IMR-90 (cell line): ENCODE measurements at regions of chr6 and their contacts with region 1.

Region 1: GRCh38 chr6:52399511-52400312 is 20.4 kb upstream of the EFHC1 start:
- DNase-seq: peak; percentile 70
- ATAC-seq: peak; percentile 96
- H3K4me3 ChIP-seq: no peak overlapping the region
- H3K27ac ChIP-seq: no peak overlapping the region
- H3K4me1 ChIP-seq: peaks cover 2% of the 10 kb centered on the region; the same call in 1 of the 2 replicates
- H3K27me3 ChIP-seq: no peaks in the 10 kb centered on the region
- CTCF ChIP-seq: peak; percentile 91
- POLR2A ChIP-seq: no peak
- RAD21 ChIP-seq: peak; percentile 86

Region 2: GRCh38 chr6:52162940-52163908 is 236.5 kb before region 1 on chr6:
- CTCF ChIA-PET with region 1: no interaction called
- POLR2A ChIA-PET with region 1: no interaction called
- dilution Hi-C with region 1: no loop called
- in situ Hi-C with region 1: loop called (anchors 10 kb)
- intact Hi-C with region 1: loop called (anchors 1 kb)
- DNase-seq: peak; percentile 30
- ATAC-seq: peak; percentile 53; the same call in 1 of the 2 replicates
- H3K4me3 ChIP-seq: no peak overlapping the region
- H3K27ac ChIP-seq: no peak overlapping the region
- H3K4me1 ChIP-seq: no peaks in the 10 kb centered on the region
- H3K27me3 ChIP-seq: no peaks in the 10 kb centered on the region; the same call in 1 of the 2 replicates
- CTCF ChIP-seq: peak; percentile 72
- POLR2A ChIP-seq: no peak
- RAD21 ChIP-seq: peak; percentile 71

Region 3: GRCh38 chr6:52284460-52285176 is 115.1 kb before region 1 on chr6 and contains the start of gene MCM3:
- CTCF ChIA-PET with region 1: interaction called, 9 read pairs
- POLR2A ChIA-PET with region 1: no interaction called
- dilution Hi-C with region 1: no loop called
- in situ Hi-C with region 1: no loop called
- intact Hi-C with region 1: loop called (anchors 1 kb)
- DNase-seq: peak; percentile 99
- ATAC-seq: peak; percentile 99
- H3K4me3 ChIP-seq: peak within 1 kb of the TSS; percentile 65
- H3K27ac ChIP-seq: peak within 1 kb of the TSS; percentile 31; the same call in 1 of the 2 replicates
- H3K4me1 ChIP-seq: no peaks in the 10 kb centered on the region
- H3K27me3 ChIP-seq: no peaks in the 10 kb centered on the region
- CTCF ChIP-seq: peak; percentile 18; the same call in 1 of the 2 replicates
- POLR2A ChIP-seq: no peak; the same call in 1 of the 2 replicates
- RAD21 ChIP-seq: no peak
- total RNA-seq, gene MCM3: 66.5 and 76.7 TPM in 2 replicates

Region 4: DNA sequence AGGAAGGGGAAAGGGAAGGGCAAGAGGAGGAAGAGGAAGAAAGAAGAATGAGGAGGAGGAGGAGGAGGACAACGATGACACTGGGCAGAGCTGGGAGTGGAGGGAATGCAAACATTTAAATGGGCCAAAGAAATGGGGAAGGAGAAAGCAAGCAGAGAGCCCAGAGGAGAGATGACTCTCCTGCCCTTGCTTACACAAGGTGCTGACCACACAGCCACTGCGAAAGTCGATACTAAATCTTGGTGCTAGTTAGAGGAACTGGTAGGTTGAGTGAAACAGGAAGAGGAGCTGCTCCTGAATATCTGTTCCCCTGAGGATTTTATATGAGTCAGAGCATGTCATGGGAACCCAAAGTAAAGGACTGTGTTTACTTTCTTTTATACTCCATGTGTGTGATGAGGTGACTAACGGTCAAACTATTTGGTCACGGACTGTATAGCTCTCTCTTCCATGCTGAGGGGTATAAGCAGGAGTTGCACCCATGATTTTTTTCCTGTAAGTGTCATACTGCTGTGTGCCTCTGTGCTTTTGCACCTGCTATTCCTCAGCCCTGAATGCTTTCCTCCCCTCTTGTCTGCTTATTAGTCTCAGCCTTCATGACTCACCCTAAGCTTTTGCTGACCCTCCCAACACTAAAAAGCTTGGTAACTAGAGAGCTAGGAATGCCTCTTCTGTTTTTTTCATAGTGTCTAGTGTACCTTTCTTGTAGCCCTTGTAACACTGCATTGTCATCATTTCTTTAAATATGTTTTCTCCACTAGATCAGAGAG is 47.3 kb before region 1 on chr6:
- CTCF ChIA-PET with region 1: no interaction called
- POLR2A ChIA-PET with region 1: no interaction called
- dilution Hi-C with region 1: no loop called
- in situ Hi-C with region 1: no loop called
- intact Hi-C with region 1: loop called (anchors 5 kb)
- DNase-seq: peak; percentile 98
- ATAC-seq: peak; percentile 94
- H3K4me3 ChIP-seq: no peak overlapping the region; the same call in 1 of the 2 replicates
- H3K27ac ChIP-seq: peak overlapping the region; percentile 61
- H3K4me1 ChIP-seq: peaks cover 7% of the 10 kb centered on the region
- H3K27me3 ChIP-seq: peaks cover 4% of the 10 kb centered on the region; the same call in 1 of the 2 replicates
- CTCF ChIP-seq: no peak
- POLR2A ChIP-seq: no peak
- RAD21 ChIP-seq: no peak

Region 5: GRCh38 chr6:52815167-52816092 is 415.7 kb after region 1 on chr6:
- CTCF ChIA-PET with region 1: no interaction called
- POLR2A ChIA-PET with region 1: no interaction called
- dilution Hi-C with region 1: no loop called
- in situ Hi-C with region 1: no loop called
- intact Hi-C with region 1: loop called (anchors 10 kb)
- DNase-seq: peak; percentile 50
- ATAC-seq: peak; percentile 96
- H3K4me3 ChIP-seq: no peak overlapping the region
- H3K27ac ChIP-seq: no peak overlapping the region
- H3K4me1 ChIP-seq: peaks cover 1% of the 10 kb centered on the region; the same call in 1 of the 2 replicates
- H3K27me3 ChIP-seq: peaks cover 8% of the 10 kb centered on the region; the same call in 1 of the 2 replicates
- CTCF ChIP-seq: peak; percentile 61
- POLR2A ChIP-seq: no peak
- RAD21 ChIP-seq: peak; percentile 53